ENCODE measurements at regions of chr19 and their contacts with region 1.

Region 1: GRCh38 chr19:10454267-10454666 is 33.9 kb downstream of the PDE4A start:
- DNase-seq: no peak
- H3K4me3 ChIP-seq: no peak overlapping the region
- H3K27ac ChIP-seq: no peak overlapping the region
- H3K27me3 ChIP-seq: no peaks in the 10 kb centered on the region
- CTCF ChIP-seq: no peak

Region 2: DNA sequence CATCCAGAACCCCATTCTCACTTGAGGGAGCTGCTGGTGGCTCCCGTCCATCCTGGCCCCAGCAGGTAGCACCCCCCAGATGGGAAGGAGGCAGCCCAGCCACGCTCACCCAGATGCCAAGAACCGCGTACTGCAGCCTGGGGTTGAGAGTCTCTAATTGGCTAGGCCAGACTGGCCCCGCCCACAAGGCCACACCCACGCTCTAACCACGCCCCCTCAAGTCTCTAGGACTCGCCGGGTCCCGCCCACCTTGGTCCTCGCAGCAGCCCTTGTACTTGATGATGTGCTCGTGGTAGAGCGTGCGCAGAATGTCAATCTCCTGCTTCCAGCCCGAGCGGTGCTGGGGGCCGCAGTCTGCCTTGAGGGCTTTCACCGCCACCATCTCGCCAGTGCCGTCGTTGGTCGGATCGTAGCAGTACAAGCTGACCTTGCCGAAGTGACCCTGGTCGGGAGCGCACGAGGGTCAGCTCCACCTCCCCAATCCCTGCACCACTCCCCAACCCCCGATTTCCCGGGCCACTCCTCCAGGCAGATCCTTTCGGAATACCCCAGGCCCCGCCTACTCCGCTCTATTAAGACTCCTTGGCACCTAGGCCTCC is 100.4 kb before region 1 on chr19:
- CTCF ChIA-PET with region 1: no interaction called
- POLR2A ChIA-PET with region 1: no interaction called
- DNase-seq: no peak
- H3K4me3 ChIP-seq: no peak overlapping the region
- H3K27ac ChIP-seq: no peak overlapping the region
- H3K27me3 ChIP-seq: no peaks in the 10 kb centered on the region
- CTCF ChIP-seq: no peak

Region 3: GRCh38 chr19:10388957-10389356 is 65.3 kb before region 1 on chr19:
- CTCF ChIA-PET with region 1: no interaction called
- POLR2A ChIA-PET with region 1: no interaction called
- DNase-seq: peak; percentile 50
- H3K4me3 ChIP-seq: no peak overlapping the region
- H3K27ac ChIP-seq: peak overlapping the region; percentile 11
- H3K27me3 ChIP-seq: no peaks in the 10 kb centered on the region
- CTCF ChIP-seq: peak; percentile 96

Region 4: DNA sequence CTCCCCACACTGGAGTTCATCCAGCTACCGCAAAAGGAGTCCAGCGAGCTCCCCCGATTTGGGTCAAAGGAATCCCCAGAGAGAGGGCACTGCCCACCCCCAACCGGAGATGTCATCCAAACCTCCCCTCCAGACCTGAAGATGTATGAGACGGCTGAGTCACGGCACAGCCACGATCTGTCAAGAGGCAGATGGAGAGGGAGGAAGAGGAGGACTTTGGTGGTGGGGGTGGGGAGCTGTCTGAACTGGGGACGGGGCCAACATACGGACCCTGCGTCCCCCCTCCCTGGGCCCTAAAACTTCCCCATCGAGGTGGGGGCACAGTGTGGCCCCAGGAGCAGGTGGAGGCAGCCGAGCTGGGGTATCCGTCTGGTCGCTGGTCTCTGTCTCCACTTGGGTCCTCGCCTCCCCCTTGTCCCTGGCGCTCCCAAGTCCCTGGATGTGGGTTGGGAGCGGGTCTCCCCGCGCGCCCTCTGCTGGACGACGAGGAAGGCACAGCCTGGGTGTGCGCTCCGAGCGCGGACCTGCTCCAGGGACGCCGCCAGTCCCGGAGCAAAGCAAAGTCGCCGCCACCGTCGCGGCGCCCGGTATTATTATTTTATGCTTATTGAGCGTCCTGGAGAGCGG is 30.1 kb before region 1 on chr19:
- CTCF ChIA-PET with region 1: interaction called, 12 read pairs
- POLR2A ChIA-PET with region 1: no interaction called
- DNase-seq: no peak
- H3K4me3 ChIP-seq: peak overlapping the region; percentile 58
- H3K27ac ChIP-seq: no peak overlapping the region
- H3K27me3 ChIP-seq: peaks cover 7% of the 10 kb centered on the region
- CTCF ChIP-seq: peak; percentile 82

Region 5: GRCh38 chr19:10442698-10443097 is 11.6 kb before region 1 on chr19:
- CTCF ChIA-PET with region 1: no interaction called
- POLR2A ChIA-PET with region 1: no interaction called
- DNase-seq: no peak
- H3K4me3 ChIP-seq: no peak overlapping the region
- H3K27ac ChIP-seq: no peak overlapping the region
- H3K27me3 ChIP-seq: no peaks in the 10 kb centered on the region
- CTCF ChIP-seq: no peak

Region 6: GRCh38 chr19:10471909-10472308 is 17.6 kb after region 1 on chr19:
- CTCF ChIA-PET with region 1: no interaction called
- POLR2A ChIA-PET with region 1: no interaction called
- DNase-seq: no peak
- H3K4me3 ChIP-seq: no peak overlapping the region
- H3K27ac ChIP-seq: no peak overlapping the region
- H3K27me3 ChIP-seq: no peaks in the 10 kb centered on the region
- CTCF ChIP-seq: peak; percentile 56